ENCODE measurements at regions of chr17 and their contacts with region 1.

Region 1: DNA sequence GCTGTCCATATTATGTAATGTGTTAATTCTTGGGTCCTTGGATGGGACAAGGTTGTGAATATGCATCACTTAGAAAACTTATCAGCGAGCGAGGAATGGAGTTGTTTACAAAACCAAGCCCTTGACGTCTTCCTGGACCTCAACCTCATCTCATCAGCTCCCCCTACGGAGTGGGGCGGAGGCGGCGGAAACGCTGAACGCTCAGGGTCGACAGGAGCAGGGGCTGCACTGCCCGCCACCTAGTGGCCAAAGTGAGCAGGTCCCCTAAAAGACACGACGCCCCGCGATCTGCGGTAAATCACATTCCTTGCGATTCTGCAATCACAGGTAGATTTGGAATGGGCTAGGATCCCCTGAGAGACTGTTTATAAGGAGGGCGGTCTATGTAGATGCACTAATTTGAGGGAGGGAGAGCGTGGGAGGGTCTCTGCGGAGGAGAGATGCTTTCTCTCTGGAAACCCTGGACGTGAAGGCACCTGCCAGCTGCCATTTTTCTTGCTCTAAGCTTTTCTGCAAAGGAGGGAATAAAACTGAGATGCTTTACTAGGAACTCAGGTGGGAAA is 5.4 kb upstream of the ICAM2 start:
- DNase-seq: peak; percentile 86 to 87
- H3K4me3 ChIP-seq: peak overlapping the region; percentile 13; the same call in 1 of the 2 replicates
- H3K4me3 Mint-ChIP-seq: peak overlapping the region; percentile 71
- H3K27ac Mint-ChIP-seq: no peak overlapping the region
- H3K4me1 ChIP-seq: no peaks in the 10 kb centered on the region
- H3K4me1 Mint-ChIP-seq: peaks cover 16% of the 10 kb centered on the region
- H3K27me3 ChIP-seq: no peaks in the 10 kb centered on the region
- H3K27me3 Mint-ChIP-seq: no peaks in the 10 kb centered on the region
- CTCF ChIP-seq: peak; percentile 96 to 97

Region 2: GRCh38 chr17:64196626-64197025 is 170.8 kb after region 1 on chr17:
- CTCF ChIA-PET with region 1: interaction called, 12 read pairs
- POLR2A ChIA-PET with region 1: no interaction called
- intact Hi-C with region 1: no loop called
- DNase-seq: no peak
- H3K4me3 ChIP-seq: no peak overlapping the region
- H3K4me3 Mint-ChIP-seq: no peak overlapping the region
- H3K27ac Mint-ChIP-seq: no peak overlapping the region
- H3K4me1 ChIP-seq: peaks cover 14% of the 10 kb centered on the region
- H3K4me1 Mint-ChIP-seq: peaks cover 8% of the 10 kb centered on the region
- H3K27me3 ChIP-seq: no peaks in the 10 kb centered on the region
- H3K27me3 Mint-ChIP-seq: no peaks in the 10 kb centered on the region
- CTCF ChIP-seq: no peak